ENCODE measurements at regions of chr2 and their contacts with region 1.

Region 1: GRCh38 chr2:155310589-155310988 is 612.1 kb downstream of the KCNJ3 start:
- DNase-seq: peak; percentile 21
- ATAC-seq: peak; percentile 62
- H3K4me3 ChIP-seq: no peak overlapping the region
- H3K27ac ChIP-seq: no peak overlapping the region
- H3K4me1 ChIP-seq: no peaks in the 10 kb centered on the region
- H3K27me3 ChIP-seq: no peaks in the 10 kb centered on the region
- CTCF ChIP-seq: peak; percentile 44
- EP300 ChIP-seq: no peak
- POLR2A ChIP-seq: no peak
- RAD21 ChIP-seq: no peak

Region 2: DNA sequence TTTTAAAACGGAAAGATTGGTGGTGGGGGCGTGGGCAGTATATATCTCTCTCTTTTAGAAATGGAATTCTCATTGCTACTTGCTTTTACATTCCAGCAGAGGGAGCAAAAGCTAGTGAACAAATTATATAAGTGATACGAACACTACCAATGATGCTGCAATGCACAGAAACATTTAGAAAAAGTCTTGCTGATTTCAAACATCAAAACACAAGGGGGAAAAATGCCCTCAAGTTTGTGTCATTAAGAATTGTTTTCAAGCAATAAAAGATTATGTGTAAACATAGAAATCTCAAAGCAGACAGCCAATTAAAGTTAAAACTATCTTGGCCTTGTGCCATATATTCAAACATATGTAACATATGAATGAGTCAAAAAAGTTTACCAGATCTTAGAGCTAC is 908.4 kb before region 1 on chr2:
- CTCF ChIA-PET with region 1: interaction called, 8 read pairs
- POLR2A ChIA-PET with region 1: no interaction called
- in situ Hi-C with region 1: no loop called
- intact Hi-C with region 1: loop called (anchors 1 kb)
- DNase-seq: peak; percentile 53
- ATAC-seq: peak; percentile 84
- H3K4me3 ChIP-seq: no peak overlapping the region
- H3K27ac ChIP-seq: no peak overlapping the region
- H3K4me1 ChIP-seq: peaks cover 11% of the 10 kb centered on the region
- H3K27me3 ChIP-seq: no peaks in the 10 kb centered on the region
- CTCF ChIP-seq: peak; percentile 65
- EP300 ChIP-seq: no peak
- POLR2A ChIP-seq: no peak
- RAD21 ChIP-seq: peak; percentile 51; the same call in 1 of the 2 replicates

Region 3: GRCh38 chr2:155033652-155034051 is 276.9 kb before region 1 on chr2:
- CTCF ChIA-PET with region 1: no interaction called
- POLR2A ChIA-PET with region 1: no interaction called
- in situ Hi-C with region 1: no loop called
- intact Hi-C with region 1: no loop called
- DNase-seq: no peak
- ATAC-seq: no peak
- H3K4me3 ChIP-seq: no peak overlapping the region
- H3K27ac ChIP-seq: no peak overlapping the region
- H3K4me1 ChIP-seq: no peaks in the 10 kb centered on the region
- H3K27me3 ChIP-seq: no peaks in the 10 kb centered on the region
- CTCF ChIP-seq: no peak
- EP300 ChIP-seq: no peak
- POLR2A ChIP-seq: no peak
- RAD21 ChIP-seq: no peak

Region 4: GRCh38 chr2:155256803-155257202 is 53.8 kb before region 1 on chr2:
- CTCF ChIA-PET with region 1: no interaction called
- POLR2A ChIA-PET with region 1: no interaction called
- in situ Hi-C with region 1: no loop called
- intact Hi-C with region 1: loop called (anchors 2 kb)
- DNase-seq: peak; percentile 78
- ATAC-seq: peak; percentile 100
- H3K4me3 ChIP-seq: no peak overlapping the region
- H3K27ac ChIP-seq: no peak overlapping the region
- H3K4me1 ChIP-seq: no peaks in the 10 kb centered on the region
- H3K27me3 ChIP-seq: no peaks in the 10 kb centered on the region
- CTCF ChIP-seq: peak; percentile 61
- EP300 ChIP-seq: no peak
- POLR2A ChIP-seq: no peak
- RAD21 ChIP-seq: peak; percentile 46; the same call in 1 of the 2 replicates

Region 5: DNA sequence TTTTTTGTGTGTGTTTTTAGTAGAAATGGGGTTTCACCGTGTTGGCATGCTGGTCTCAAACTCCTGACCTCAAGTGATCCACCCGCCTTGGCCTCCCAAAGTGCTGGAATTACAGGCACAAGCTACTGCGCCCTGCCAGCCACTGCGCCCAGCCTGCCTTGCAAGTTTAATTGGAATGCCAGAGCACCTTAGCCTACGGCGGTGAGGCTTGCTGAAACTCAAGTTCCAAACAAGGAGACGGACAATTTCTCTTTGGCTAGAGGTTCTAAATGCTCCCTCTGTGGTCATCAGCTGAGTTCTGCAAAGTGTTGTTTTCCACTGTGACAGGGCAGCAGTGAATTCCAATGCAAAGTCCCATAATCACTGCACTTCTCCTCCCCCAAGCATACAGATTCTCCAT is 28.7 kb before region 1 on chr2:
- CTCF ChIA-PET with region 1: no interaction called
- POLR2A ChIA-PET with region 1: no interaction called
- in situ Hi-C with region 1: no loop called
- intact Hi-C with region 1: no loop called
- DNase-seq: no peak
- ATAC-seq: no peak
- H3K4me3 ChIP-seq: no peak overlapping the region
- H3K27ac ChIP-seq: no peak overlapping the region
- H3K4me1 ChIP-seq: no peaks in the 10 kb centered on the region
- H3K27me3 ChIP-seq: no peaks in the 10 kb centered on the region; a peak in 1 of 5 replicates
- CTCF ChIP-seq: no peak
- EP300 ChIP-seq: no peak
- POLR2A ChIP-seq: no peak
- RAD21 ChIP-seq: no peak

Measured in HepG2 (cell line).